ENCODE measurements at regions of chr12 and their contacts with region 1.

Region 1: DNA sequence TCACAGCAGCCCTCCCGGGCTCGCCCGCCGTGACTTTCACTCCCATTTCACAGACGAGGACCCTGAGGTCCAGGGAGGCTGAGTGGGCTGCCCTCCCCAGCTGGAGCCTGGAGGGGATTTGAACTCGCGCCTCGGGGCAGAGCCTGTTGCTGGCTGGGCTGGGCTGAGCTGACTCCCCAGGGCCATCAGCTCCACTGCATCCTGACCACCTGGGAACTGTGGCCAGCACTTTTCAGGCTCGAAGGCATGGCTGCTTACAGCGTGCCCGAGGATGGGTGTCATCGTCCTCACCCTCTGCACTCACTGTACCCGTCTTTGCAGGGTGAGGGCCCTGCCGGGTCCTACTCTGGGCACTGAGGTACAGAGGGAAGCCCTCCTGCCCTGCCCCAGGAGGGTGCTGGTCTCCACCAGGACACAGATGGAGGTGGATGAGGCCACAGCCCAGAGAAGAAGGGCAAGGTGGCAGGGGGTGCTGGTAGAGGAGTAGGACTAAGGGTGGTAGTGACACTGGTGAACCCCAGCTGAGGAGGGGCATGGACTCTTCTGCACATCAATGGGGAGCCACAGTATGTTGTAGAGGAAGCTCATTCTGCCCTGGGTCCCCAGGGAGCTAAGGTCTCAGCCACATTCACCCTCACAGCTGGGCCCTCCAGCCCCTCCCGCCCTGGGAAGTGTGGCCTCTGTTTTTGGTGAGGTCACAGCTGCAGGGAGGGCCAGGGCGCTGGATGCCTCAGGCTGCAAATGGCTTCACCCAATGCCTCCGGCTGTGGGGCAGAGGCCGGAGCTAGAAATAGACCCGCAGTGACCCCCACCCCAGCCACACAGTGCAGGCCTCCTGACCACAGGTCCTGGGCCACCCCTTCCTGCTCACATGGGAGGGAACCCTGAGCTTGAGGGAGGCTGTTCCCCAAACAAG is 365.1 kb upstream of the SFSWAP start:
- DNase-seq: no peak
- H3K4me3 ChIP-seq: no peak overlapping the region
- H3K27ac ChIP-seq: no peak overlapping the region
- H3K4me1 ChIP-seq: no peaks in the 10 kb centered on the region
- H3K27me3 ChIP-seq: peaks cover under 1% of the 10 kb centered on the region
- CTCF ChIP-seq: no peak
- EP300 ChIP-seq: no peak
- POLR2A ChIP-seq: no peak

Region 2: DNA sequence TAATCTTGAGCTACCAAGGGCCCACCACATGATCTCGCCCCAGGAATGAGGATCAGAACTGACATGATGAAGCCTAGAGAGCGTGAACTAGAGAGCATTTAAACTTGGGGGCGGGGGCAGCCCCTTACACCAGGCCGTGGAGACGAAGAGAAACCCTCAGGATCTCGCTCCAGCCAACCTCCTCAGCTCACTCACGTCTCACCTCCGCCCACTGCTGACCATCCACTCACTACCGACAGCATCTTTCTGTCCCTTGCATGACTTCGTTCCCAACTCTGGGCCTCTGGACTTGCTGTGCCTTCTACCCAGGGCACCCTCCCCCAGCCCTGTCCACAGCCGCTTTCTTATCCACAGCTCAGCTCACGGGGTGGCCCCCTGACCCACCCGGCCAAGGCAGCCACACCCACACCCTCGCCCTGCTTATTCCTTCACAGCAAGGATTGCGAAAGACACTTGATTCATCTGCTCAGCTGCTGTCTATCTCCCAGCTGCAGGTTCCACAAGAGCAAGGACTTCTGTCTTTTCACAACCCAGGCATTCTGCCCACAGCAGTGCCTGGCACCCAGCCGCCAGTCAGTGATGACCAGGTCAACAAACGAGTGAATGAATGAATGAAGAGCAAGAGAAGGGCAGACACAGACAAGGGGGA is 513.1 kb before region 1 on chr12:
- in situ Hi-C with region 1: no loop called
- intact Hi-C with region 1: no loop called
- DNase-seq: no peak
- H3K4me3 ChIP-seq: no peak overlapping the region
- H3K27ac ChIP-seq: no peak overlapping the region
- H3K4me1 ChIP-seq: peaks cover 0 to 17% (median 1%) of the 10 kb centered on the region in 4 donors
- H3K27me3 ChIP-seq: no peaks in the 10 kb centered on the region
- CTCF ChIP-seq: no peak
- EP300 ChIP-seq: no peak
- POLR2A ChIP-seq: no peak

Region 3: GRCh38 chr12:131282292-131283080 is 63.3 kb before region 1 on chr12:
- in situ Hi-C with region 1: no loop called
- intact Hi-C with region 1: no loop called
- DNase-seq: no peak
- H3K4me3 ChIP-seq: no peak overlapping the region
- H3K27ac ChIP-seq: no peak overlapping the region
- H3K4me1 ChIP-seq: no peaks in the 10 kb centered on the region
- H3K27me3 ChIP-seq: no peaks in the 10 kb centered on the region
- CTCF ChIP-seq: no peak
- EP300 ChIP-seq: no peak
- POLR2A ChIP-seq: no peak

Region 4: DNA sequence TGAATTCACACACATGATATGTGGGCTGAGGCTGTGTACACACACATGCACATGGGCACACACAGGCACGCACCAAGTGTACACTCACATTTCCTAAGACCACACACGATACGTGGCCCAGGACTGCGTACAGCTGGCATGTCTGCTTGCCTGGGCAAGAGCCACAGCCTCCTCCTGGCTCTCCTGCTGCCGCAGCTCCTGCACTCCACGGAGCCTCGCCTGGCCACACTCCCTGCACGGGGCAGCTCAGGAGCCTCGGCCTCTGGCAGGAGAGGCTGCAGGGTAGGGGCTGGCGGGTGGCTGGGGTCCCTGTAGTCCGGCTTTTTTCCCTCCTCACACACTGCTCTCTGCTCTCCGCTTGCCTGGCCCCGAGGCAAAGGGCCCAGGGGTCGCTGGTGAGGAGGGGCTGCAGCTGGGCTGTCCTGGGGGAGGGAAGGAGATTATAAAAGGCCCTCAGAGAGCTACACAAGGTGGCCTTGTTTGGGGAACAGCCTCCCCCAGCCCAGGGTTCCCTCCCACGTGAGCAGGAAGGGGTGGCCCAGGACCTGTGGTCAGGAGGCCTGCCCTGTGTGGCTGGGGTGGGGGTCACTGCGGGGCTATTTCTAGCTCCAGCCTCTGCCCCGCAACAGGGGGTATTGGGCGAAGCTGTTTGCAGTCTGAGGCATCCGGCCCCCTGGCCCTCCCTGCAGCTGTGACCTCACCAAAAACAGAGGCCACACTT is 276.1 kb after region 1 on chr12:
- in situ Hi-C with region 1: loop called in 1 of 4 experiments (anchors 5 kb)
- intact Hi-C with region 1: no loop called
- DNase-seq: no peak
- H3K4me3 ChIP-seq: no peak overlapping the region
- H3K27ac ChIP-seq: no peak overlapping the region
- H3K4me1 ChIP-seq: no peaks in the 10 kb centered on the region
- H3K27me3 ChIP-seq: peaks cover 24% of the 10 kb centered on the region
- CTCF ChIP-seq: no peak
- EP300 ChIP-seq: no peak
- POLR2A ChIP-seq: no peak